Heart left ventricle (tissue), 16 donors: ENCODE measurements at regions of chr16 and their contacts with region 1.

Region 1: GRCh38 chr16:23334950-23335349 is 32.8 kb downstream of the SCNN1B start:
- DNase-seq: no peak
- ATAC-seq: no peak
- H3K4me3 ChIP-seq: no peak overlapping the region
- H3K27ac ChIP-seq: no peak overlapping the region
- H3K4me1 ChIP-seq: no peaks in the 10 kb centered on the region
- H3K27me3 ChIP-seq: peaks cover 0 to 8% (median 0%) of the 10 kb centered on the region in 9 donors
- CTCF ChIP-seq: no peak
- POLR2A ChIP-seq: no peak

Region 2: GRCh38 chr16:23274969-23275368 is 60.0 kb before region 1 on chr16:
- intact Hi-C with region 1: no loop called
- DNase-seq: no peak
- ATAC-seq: no peak
- H3K4me3 ChIP-seq: no peak overlapping the region
- H3K27ac ChIP-seq: no peak overlapping the region
- H3K4me1 ChIP-seq: no peaks in the 10 kb centered on the region
- H3K27me3 ChIP-seq: peaks cover 0 to 28% (median 0%) of the 10 kb centered on the region in 9 donors
- CTCF ChIP-seq: no peak
- POLR2A ChIP-seq: no peak

Region 3: GRCh38 chr16:23384878-23385277 is 49.9 kb after region 1 on chr16:
- intact Hi-C with region 1: loop called in 1 of 10 experiments (anchors 5 kb)
- DNase-seq: no peak
- ATAC-seq: no peak
- H3K4me3 ChIP-seq: no peak overlapping the region
- H3K27ac ChIP-seq: no peak overlapping the region
- H3K4me1 ChIP-seq: no peaks in the 10 kb centered on the region
- H3K27me3 ChIP-seq: no peaks in the 10 kb centered on the region
- CTCF ChIP-seq: no peak
- POLR2A ChIP-seq: no peak

Region 4: DNA sequence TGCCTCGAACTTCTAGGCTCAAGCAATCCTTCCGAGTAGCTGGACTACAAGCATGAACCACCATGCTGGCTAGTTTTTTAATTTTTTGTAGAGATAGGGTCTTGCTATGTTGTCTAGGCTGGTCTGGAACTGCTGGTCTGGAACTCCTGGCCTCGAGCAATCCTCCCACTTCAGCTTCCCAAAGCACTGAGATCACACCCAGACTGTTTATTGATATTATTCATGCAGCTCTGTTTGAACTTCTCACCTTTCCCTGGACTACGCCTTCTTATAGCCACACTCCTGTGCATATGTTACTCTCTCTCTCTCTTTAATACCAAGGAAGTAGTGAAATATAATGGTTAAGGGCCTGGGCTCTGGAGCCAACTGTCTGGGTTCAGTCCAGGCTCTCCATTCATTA is 113.4 kb after region 1 on chr16:
- intact Hi-C with region 1: no loop called
- DNase-seq: no peak
- ATAC-seq: no peak
- H3K4me3 ChIP-seq: no peak overlapping the region
- H3K27ac ChIP-seq: no peak overlapping the region
- H3K4me1 ChIP-seq: peaks cover 2 to 24% (median 11%) of the 10 kb centered on the region in 12 donors
- H3K27me3 ChIP-seq: no peaks in the 10 kb centered on the region
- CTCF ChIP-seq: no peak
- POLR2A ChIP-seq: no peak